Activated CD4-positive, alpha-beta T cell treated with anti-CD3 and anti-CD28 coated beads for 36 hours (primary cell): ENCODE measurements at regions of chr15 and their contacts with region 1.

Region 1: DNA sequence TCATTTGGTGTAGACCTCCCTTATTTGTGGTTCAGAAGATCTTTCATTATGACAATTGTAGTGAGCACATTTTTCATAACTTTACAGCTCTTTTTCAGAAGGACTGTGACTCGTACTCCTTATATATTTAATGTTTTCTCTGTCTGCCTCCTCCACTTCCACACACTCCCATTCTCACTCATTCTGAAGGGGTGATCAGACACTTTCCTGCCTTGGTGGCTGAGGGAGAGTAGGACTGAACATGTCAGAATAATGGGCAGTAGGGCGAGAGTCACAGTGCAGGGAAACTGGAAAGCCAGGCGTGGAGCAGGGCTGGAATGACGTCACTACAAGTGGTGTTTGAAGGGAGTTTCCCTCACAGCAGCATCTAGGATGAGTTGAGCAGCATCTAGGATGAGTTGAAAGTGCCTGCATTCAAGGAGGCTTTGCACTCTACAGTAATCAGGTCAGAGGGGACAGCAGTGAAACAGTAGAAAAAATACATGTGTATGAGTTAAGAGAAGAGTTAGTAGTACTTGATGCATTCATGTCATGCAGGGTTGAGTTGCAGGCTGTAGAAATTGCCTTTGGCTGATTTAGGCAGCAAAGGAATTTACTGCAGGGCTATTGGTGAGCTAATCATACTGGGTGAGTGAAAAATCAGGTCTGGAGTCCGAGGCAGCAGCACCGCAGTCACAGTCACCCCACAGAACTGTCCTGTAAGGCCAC is 36.3 kb upstream of the FBXL22 start:
- DNase-seq: peak; percentile 81
- ATAC-seq: peak; percentile 95
- H3K4me3 Mint-ChIP-seq: no peak overlapping the region
- H3K27ac Mint-ChIP-seq: peak overlapping the region; percentile 74
- H3K4me1 Mint-ChIP-seq: peaks cover 49% of the 10 kb centered on the region
- H3K27me3 Mint-ChIP-seq: no peaks in the 10 kb centered on the region

Region 2: DNA sequence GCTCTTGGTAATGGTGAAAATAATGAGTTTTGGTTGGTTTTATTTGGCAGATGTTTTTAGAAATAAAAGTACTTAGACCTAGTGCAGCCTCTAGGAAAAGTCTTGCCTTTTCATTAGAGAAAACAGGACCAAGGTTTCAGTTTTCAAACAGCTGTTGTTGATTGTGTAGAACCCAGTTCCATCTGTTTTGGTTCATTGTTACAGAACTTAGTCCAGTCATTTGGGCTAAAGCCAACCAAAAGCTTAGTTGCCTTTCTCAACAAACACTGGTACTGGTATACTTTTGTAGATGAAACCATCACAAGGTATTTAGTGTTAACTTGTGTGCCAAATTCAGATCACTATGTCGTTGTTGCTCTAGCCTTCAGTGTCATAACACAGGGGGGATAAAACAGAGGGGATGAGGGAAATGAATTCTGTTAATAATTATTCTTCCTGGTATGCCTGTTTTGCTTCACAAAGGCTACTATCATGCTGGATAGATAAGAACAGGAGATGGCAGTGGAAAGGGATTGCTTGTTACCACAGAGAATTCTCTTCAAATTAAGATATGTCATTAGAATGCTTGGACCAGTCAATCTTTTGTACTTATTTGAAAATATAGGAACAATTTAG is 296.1 kb before region 1 on chr15:
- CTCF ChIA-PET with region 1: no interaction called
- POLR2A ChIA-PET with region 1: no interaction called
- intact Hi-C with region 1: no loop called
- DNase-seq: no peak
- ATAC-seq: no peak
- H3K4me3 Mint-ChIP-seq: no peak overlapping the region
- H3K27ac Mint-ChIP-seq: peak overlapping the region; percentile 33
- H3K4me1 Mint-ChIP-seq: no peaks in the 10 kb centered on the region
- H3K27me3 Mint-ChIP-seq: no peaks in the 10 kb centered on the region

Region 3: GRCh38 chr15:63600616-63601025 is 39.7 kb after region 1 on chr15:
- CTCF ChIA-PET with region 1: interaction called, 3 read pairs
- POLR2A ChIA-PET with region 1: no interaction called
- intact Hi-C with region 1: loop called (anchors 2 kb)
- DNase-seq: peak; percentile 95
- ATAC-seq: peak; percentile 74
- H3K4me3 Mint-ChIP-seq: peak overlapping the region; percentile 88
- H3K27ac Mint-ChIP-seq: peak overlapping the region; percentile 96
- H3K4me1 Mint-ChIP-seq: peaks cover 54% of the 10 kb centered on the region
- H3K27me3 Mint-ChIP-seq: no peaks in the 10 kb centered on the region

Region 4: DNA sequence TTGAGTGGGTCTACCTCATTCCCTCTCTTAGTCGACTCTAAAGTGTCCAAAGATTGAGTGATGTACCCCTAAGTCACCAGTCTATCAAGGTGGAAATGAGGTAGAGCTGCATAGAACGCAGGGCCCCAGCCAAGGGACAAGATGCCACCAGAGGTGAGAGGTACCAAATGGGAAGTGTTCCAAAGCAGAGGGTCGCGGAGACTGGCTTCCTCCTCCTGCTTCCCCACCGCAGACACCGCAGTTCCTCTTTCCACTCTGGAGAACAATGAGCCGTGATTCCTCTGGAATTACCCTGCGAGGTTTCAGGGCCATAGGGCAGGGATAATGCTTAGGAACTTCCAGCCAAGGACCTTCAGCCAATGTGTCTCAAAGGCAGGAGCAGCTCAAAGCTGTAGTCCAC is 429.6 kb after region 1 on chr15:
- CTCF ChIA-PET with region 1: no interaction called
- POLR2A ChIA-PET with region 1: no interaction called
- intact Hi-C with region 1: no loop called
- DNase-seq: no peak
- ATAC-seq: no peak
- H3K4me3 Mint-ChIP-seq: no peak overlapping the region
- H3K27ac Mint-ChIP-seq: no peak overlapping the region
- H3K4me1 Mint-ChIP-seq: peaks cover 17% of the 10 kb centered on the region
- H3K27me3 Mint-ChIP-seq: no peaks in the 10 kb centered on the region